ENCODE measurements at regions of chr2 and their contacts with region 1.

Region 1: DNA sequence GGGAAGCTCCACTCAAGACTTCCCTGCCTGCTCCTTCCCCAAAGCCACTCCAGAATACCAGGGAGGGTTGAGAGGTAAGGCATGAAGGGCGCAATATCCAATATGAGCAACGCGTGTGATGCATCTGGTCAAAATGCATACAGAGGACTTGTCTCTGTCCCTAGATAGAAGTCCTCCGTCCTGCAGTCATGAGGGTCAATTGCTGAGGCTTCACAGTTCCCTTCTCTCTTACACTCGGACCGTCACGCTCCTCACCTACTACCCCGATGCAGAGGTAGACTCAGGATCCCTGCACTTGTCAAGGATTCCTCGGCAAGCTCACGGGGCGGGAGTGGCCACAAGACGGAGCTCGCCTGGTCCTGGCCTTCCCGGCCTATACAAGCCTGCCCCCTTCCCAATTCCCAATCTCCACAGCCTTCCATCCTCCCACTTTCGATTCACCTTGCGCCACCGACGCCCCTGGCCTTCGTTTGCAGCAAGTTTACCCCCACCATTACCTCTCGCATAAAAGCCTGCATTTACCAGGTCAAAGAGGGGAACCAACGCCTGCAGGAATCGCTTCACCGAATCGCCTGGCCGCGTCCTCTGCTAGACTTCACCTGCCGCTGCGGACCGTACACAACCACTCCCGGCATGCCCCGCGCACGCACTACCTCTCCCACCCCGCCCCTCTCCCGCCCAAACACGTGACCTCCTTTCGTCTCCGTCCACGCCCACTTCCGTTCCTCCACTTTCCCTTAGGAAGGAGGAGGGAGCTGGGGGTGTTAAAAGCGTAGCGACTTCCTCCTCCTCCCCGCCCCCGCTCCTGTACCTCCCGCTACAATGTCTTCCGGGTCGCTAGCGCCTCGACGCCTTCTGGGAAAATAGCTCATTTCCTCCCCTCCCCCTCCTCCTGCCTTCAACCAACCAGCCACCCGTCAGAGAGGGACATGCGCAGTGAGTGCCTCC is at the start of gene ORC4:
- DNase-seq: peak; percentile 99
- ATAC-seq: peak; percentile 89
- H3K4me3 ChIP-seq: peak within 1 kb of the TSS; percentile 79 to 95 (median 80)
- H3K4me3 Mint-ChIP-seq: peak within 1 kb of the TSS; percentile 99
- H3K27ac ChIP-seq: peak within 1 kb of the TSS; percentile 91 to 92
- H3K27ac Mint-ChIP-seq: peak within 1 kb of the TSS; percentile 94
- H3K4me1 ChIP-seq: peaks cover 23 to 37% of the 10 kb centered on the region in 2 donors
- H3K4me1 Mint-ChIP-seq: peaks cover 52% of the 10 kb centered on the region
- H3K27me3 ChIP-seq: no peaks in the 10 kb centered on the region
- H3K27me3 Mint-ChIP-seq: no peaks in the 10 kb centered on the region
- CTCF ChIP-seq: no peak
- total RNA-seq, gene ORC4: 44.3 and 48.9 TPM in 2 replicates

Region 2: GRCh38 chr2:147843864-147844696 is 176.3 kb before region 1 on chr2:
- CTCF ChIA-PET with region 1: no interaction called
- POLR2A ChIA-PET with region 1: interaction called, 4 read pairs
- intact Hi-C with region 1: loop called (anchors 1 kb)
- DNase-seq: peak; percentile 91
- ATAC-seq: peak; percentile 87
- H3K4me3 ChIP-seq: peak overlapping the region; percentile 11 to 89 (median 69)
- H3K4me3 Mint-ChIP-seq: peak overlapping the region; percentile 95
- H3K27ac ChIP-seq: peak overlapping the region; percentile 29 to 56
- H3K27ac Mint-ChIP-seq: peak overlapping the region; percentile 86
- H3K4me1 ChIP-seq: peaks cover 19 to 21% of the 10 kb centered on the region in 2 donors
- H3K4me1 Mint-ChIP-seq: peaks cover 27% of the 10 kb centered on the region
- H3K27me3 ChIP-seq: peaks cover 0 to 29% (median 26%) of the 10 kb centered on the region in 4 experiments
- H3K27me3 Mint-ChIP-seq: peaks cover 51% of the 10 kb centered on the region
- CTCF ChIP-seq: no peak